Activated CD4-positive, alpha-beta T cell treated with anti-CD3 and anti-CD28 coated beads for 36 hours (primary cell): ENCODE measurements at regions of chr1 and their contacts with region 1.

Region 1: DNA sequence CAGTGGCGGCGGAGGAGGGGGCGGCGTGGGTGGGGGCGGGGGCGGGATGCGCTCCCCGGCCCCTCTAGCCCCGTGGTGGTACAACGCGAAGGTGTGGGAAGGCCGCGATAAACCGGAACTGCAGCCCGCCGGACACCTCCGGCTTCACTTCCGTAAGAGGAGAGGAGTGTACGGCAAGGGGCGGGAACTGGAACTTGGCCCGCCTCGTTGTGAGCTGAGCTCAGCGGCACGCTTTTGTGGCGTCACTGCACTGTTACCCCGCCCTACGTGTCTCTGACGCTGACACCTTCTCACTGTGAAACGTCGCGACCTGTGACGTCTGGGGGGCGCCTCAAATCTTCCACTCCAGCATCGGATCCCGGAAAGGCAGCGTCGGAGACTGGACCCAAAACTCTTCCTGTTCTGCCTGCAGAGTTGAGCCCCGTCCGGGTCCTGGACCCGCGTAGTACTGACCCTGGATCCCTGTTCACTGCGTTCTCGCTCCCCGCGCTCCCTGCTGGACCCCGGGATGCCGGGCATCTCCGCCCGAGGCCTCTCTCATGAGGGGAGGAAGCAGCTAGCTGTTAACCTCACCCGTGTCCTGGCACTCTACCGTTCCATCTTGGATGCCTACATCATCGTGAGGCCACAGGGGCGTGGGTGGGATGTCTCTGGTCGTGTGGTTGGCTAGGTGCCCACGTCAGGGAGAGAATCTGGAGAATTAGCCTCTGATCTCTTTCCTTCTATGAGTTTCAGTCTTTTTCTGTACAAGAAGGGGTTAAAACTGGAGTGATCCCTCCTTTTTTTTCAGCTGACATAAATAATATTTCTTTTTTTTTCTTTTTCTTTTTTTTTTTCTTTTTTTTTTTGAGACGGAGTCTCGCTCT is at the start of gene ISG20L2:
- DNase-seq: peak; percentile 99
- ATAC-seq: peak; percentile 92
- H3K4me3 Mint-ChIP-seq: no peak within 1 kb of the TSS
- H3K27ac Mint-ChIP-seq: peak within 1 kb of the TSS; percentile 99
- H3K4me1 Mint-ChIP-seq: peaks cover 23% of the 10 kb centered on the region
- H3K27me3 Mint-ChIP-seq: no peaks in the 10 kb centered on the region
- total RNA-seq, gene ISG20L2: 48.4 to 65.2 TPM

Region 2: DNA sequence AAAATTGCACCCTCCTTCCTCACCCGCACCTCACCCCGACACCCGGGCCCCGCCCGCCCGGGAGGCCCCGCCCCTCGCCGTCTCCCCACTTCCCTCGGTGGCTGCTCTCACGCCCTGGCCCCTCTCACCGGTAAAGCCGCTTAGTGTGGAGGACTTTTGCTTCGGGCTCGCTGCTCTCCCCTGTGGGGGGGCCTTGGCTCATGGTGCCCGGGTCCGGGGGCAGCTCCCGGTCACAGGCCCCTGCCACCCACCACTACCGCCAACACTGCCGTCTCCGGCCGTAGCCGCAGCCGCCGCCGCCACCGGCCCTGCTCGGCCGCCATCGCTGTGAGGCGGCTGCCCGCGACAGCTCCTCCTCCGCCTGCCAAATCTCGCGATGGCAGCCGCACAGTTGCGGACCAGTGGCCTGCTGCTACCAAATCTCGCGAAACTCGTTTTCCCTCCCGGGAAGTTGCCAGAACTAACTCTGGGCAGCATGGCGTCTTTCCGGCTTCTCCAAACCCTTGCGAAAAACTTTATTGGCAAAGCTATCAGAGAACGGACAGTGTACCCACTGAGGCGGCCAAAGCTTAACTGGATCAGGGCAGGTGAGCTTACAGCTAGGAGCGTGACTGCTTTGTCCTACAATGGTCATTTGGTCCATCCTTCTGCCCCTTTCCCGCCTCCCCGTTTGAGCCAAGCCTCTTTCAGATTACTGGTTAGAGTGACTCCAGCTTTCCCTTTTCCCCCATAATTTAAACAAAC is 446.2 kb before region 1 on chr1 and contains the start of gene SMG5:
- CTCF ChIA-PET with region 1: no interaction called
- POLR2A ChIA-PET with region 1: no interaction called
- intact Hi-C with region 1: loop called in 1 of 2 experiments (anchors 1 kb)
- DNase-seq: peak; percentile 98
- ATAC-seq: peak; percentile 92
- H3K4me3 Mint-ChIP-seq: peak within 1 kb of the TSS; percentile 96
- H3K27ac Mint-ChIP-seq: peak within 1 kb of the TSS; percentile 92
- H3K4me1 Mint-ChIP-seq: peaks cover 29% of the 10 kb centered on the region
- H3K27me3 Mint-ChIP-seq: no peaks in the 10 kb centered on the region
- total RNA-seq, gene SMG5: 61.7 to 64.6 TPM

Region 3: DNA sequence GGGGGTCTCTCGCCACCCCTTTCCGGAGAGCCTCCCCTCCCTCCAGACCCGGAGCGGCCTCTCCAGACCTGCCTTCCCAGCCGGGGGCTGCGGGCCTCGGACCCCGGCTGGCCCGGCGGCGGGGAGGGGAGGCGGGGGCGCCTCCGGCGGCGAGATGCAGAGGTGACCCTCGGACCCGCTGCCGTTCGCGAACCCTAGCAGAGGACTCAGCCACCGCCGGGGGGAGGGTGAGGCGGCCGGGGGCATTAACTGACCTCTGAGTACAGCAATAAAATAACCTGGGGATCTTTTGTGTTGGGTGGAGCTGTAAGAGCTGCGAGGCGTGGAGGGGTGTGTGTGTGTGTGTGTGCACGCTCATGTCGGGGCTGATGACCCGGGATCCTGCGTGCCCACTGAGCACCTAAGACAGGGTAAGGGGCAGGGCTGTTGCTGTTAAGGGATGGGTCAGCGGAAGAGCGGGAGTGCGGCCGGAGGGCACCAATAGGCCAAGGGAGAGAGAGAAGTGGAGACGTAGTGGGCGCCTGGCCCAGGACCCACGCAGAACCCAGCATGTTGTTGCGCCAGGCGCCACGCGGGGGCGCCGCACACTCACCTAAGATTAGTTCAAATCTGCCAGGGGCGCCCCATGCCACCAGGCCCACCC is 103.3 kb before region 1 on chr1:
- CTCF ChIA-PET with region 1: interaction called, 15 read pairs
- POLR2A ChIA-PET with region 1: no interaction called
- intact Hi-C with region 1: loop called in 1 of 2 experiments (anchors 1 kb)
- DNase-seq: peak; percentile 83
- ATAC-seq: peak; percentile 65
- H3K4me3 Mint-ChIP-seq: peak overlapping the region; percentile 53
- H3K27ac Mint-ChIP-seq: no peak overlapping the region
- H3K4me1 Mint-ChIP-seq: peaks cover 6% of the 10 kb centered on the region
- H3K27me3 Mint-ChIP-seq: peaks cover 41% of the 10 kb centered on the region

Region 4: DNA sequence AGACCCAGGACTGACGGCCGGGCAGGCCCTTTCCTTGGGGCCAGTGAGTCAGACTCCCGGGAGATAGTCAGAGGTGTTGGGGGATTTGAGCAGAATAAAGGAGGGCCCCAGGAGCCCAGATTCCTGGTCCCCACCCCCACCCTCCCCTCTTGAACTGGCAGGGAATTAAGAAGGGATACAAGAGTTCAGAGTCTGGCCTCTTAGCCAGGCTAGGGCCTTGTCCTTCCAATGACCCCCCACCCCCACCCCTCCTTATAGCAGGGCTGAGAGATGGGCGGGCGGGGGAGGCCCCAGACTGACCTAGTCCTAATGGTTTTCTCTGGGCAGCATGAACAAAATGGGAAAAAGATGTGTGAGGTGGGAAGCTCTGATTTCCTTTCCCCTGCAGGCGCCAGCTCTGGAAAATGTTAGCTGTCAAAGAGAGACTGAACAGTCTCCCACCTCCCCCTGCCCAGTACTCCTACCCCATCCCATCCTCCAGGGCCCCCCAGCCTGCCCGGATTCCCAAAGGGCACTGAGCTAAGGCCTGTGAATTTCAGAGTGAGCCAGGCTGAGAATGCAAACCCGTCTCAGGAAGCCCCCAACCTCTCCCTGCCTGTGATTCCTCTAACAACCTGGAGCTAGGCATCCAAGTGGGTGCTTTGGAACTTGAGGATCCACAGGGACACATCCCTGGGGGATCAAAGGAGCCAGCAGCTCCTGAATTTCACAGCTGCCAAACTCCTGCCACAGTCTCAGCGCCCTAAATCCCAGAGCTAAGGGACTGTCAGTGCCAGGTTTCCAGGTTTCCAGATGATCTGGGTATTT is 17.6 kb before region 1 on chr1:
- CTCF ChIA-PET with region 1: interaction called, 110 read pairs
- POLR2A ChIA-PET with region 1: interaction called, 8 read pairs
- intact Hi-C with region 1: loop called (anchors 1 to 2 kb)
- DNase-seq: no peak
- ATAC-seq: no peak
- H3K4me3 Mint-ChIP-seq: no peak overlapping the region
- H3K27ac Mint-ChIP-seq: no peak overlapping the region
- H3K4me1 Mint-ChIP-seq: peaks cover 10% of the 10 kb centered on the region
- H3K27me3 Mint-ChIP-seq: peaks cover 2% of the 10 kb centered on the region

Region 5: GRCh38 chr1:156767101-156767878 is 38.5 kb after region 1 on chr1 and contains the start of gene PRCC:
- CTCF ChIA-PET with region 1: interaction called, 128 read pairs
- POLR2A ChIA-PET with region 1: interaction called, 36 read pairs
- intact Hi-C with region 1: loop called (anchors 1 kb)
- DNase-seq: peak; percentile 98
- ATAC-seq: peak; percentile 96
- H3K4me3 Mint-ChIP-seq: no peak within 1 kb of the TSS
- H3K27ac Mint-ChIP-seq: no peak within 1 kb of the TSS
- H3K4me1 Mint-ChIP-seq: peaks cover 35% of the 10 kb centered on the region
- H3K27me3 Mint-ChIP-seq: no peaks in the 10 kb centered on the region
- total RNA-seq, gene PRCC: 80.4 to 110 TPM

Region 6: DNA sequence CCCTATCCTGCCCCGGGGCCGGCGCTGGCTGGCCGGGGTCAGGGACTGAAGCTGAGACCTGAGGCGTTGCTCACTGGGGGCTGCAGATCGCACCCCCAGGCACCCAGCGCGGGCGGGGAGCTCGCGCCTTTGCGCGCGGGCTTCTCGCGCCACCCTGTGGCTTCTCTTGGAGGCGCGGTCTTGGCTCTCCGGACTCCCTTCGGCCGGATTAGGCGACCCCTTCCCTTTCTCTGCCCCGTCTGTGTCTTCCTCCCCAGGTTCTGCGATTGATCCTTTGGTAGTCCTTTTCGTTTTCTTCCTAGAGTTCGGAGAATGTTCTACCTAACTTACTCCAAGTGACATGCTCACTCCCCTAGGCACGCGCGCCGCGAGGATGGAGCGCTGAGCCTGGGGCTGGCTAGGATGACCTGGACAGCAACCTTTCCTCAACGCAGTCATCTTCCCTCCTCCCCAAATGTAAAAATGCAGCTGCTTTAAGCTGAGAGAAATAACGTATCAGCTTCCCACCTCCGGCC is 131.3 kb after region 1 on chr1:
- CTCF ChIA-PET with region 1: interaction called, 86 read pairs
- POLR2A ChIA-PET with region 1: interaction called, 7 read pairs
- intact Hi-C with region 1: loop called (anchors 1 to 2 kb)
- DNase-seq: peak; percentile 77
- ATAC-seq: peak; percentile 47
- H3K4me3 Mint-ChIP-seq: peak overlapping the region; percentile 56
- H3K27ac Mint-ChIP-seq: no peak overlapping the region
- H3K4me1 Mint-ChIP-seq: peaks cover 25% of the 10 kb centered on the region
- H3K27me3 Mint-ChIP-seq: peaks cover 45% of the 10 kb centered on the region

Region 7: GRCh38 chr1:156970017-156970416 is 241.2 kb after region 1 on chr1:
- CTCF ChIA-PET with region 1: no interaction called
- POLR2A ChIA-PET with region 1: no interaction called
- intact Hi-C with region 1: no loop called
- DNase-seq: no peak
- ATAC-seq: no peak
- H3K4me3 Mint-ChIP-seq: no peak overlapping the region
- H3K27ac Mint-ChIP-seq: no peak overlapping the region
- H3K4me1 Mint-ChIP-seq: no peaks in the 10 kb centered on the region
- H3K27me3 Mint-ChIP-seq: peaks cover 4% of the 10 kb centered on the region